ENCODE measurements at regions of chr7 and their contacts with region 1.

Region 1: DNA sequence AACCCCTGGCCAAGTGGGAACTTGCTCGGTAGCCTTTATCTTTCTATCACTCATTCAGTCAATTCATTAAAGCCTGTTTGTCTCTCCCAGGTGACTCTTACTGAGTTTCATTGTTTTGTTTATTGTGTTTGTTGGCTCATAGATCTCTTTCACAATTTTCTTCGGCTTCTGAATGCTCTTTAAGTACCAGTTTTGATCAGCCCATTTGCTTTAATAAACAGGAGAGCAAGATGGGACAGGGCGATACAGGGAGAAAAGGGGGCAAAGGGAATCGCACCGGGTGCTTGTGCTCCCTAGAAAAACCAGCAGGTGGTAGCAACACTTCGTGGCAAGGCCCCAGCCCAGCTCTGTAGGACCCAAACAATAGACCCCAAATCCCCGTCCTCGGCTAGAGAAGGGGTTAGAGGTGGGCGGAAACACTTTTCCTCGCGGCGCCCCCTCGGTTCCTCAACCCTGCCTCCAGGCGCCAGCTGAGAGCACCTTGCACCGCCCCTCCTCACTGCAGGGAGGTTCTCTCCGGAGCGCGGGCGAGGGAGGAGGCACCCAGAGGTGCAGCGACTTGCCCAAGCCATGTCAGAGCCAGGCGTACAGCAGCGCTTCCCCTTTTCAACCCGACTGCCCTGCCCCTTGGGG is 1.0 kb upstream of the EPHB6 start:
- DNase-seq: peak; percentile 85
- ATAC-seq: peak; percentile 88
- H3K4me3 Mint-ChIP-seq: peak overlapping the region; percentile 96
- H3K27ac Mint-ChIP-seq: peak overlapping the region; percentile 78
- H3K4me1 Mint-ChIP-seq: peaks cover 27% of the 10 kb centered on the region
- H3K27me3 Mint-ChIP-seq: peaks cover 2% of the 10 kb centered on the region

Region 2: GRCh38 chr7:142873281-142873787 is 19.5 kb after region 1 on chr7:
- CTCF ChIA-PET with region 1: interaction called, 42 read pairs
- POLR2A ChIA-PET with region 1: no interaction called
- intact Hi-C with region 1: no loop called
- DNase-seq: peak; percentile 68
- ATAC-seq: peak; percentile 77
- H3K4me3 Mint-ChIP-seq: no peak overlapping the region
- H3K27ac Mint-ChIP-seq: no peak overlapping the region
- H3K4me1 Mint-ChIP-seq: no peaks in the 10 kb centered on the region
- H3K27me3 Mint-ChIP-seq: no peaks in the 10 kb centered on the region

Region 3: GRCh38 chr7:142880876-142881505 is 27.1 kb after region 1 on chr7:
- CTCF ChIA-PET with region 1: interaction called, 6 read pairs
- POLR2A ChIA-PET with region 1: no interaction called
- intact Hi-C with region 1: loop called in 1 of 2 experiments (anchors 2 kb)
- DNase-seq: peak; percentile 67
- ATAC-seq: peak; percentile 88
- H3K4me3 Mint-ChIP-seq: no peak overlapping the region
- H3K27ac Mint-ChIP-seq: no peak overlapping the region
- H3K4me1 Mint-ChIP-seq: no peaks in the 10 kb centered on the region
- H3K27me3 Mint-ChIP-seq: peaks cover 4% of the 10 kb centered on the region

Region 4: DNA sequence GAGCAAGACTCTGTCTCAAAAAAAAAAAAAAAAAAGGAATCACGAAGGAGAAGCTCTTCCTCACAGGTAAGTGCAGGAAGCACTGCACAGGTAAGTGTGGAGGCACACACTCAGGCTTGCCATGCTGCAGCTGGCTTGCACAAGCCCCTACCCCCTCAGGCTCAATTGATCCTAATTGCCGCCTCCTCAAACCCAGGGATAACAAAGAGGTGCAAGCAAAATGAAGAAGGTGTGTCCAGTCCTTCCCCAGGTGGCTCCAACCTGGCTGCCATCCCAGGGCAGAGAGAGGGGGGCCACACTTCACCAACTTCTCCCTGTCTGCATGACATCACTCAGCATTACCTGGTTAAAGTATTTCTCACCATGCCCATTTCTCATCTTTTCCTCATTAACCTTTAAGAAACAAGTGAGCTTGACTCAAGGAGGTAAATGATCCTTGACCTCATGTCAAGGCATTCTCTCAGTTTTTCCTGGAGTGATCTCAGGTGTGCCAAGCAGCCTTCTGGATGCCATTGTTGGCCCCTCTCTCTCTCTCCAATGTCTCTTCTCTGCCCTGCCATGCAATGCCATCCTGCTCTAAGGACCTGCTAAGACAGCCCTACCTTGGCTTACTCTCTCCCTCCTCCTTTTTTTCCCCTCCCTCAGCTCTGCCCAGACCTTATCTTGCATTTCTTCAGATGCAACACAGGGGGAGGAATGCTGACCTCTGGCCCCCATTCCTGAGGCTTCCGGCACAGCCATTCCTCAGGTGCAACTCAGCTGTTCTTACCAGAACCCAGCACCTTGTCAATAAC is 44.7 kb after region 1 on chr7:
- CTCF ChIA-PET with region 1: no interaction called
- POLR2A ChIA-PET with region 1: no interaction called
- intact Hi-C with region 1: no loop called
- DNase-seq: no peak
- ATAC-seq: no peak
- H3K4me3 Mint-ChIP-seq: no peak overlapping the region
- H3K27ac Mint-ChIP-seq: no peak overlapping the region
- H3K4me1 Mint-ChIP-seq: no peaks in the 10 kb centered on the region
- H3K27me3 Mint-ChIP-seq: no peaks in the 10 kb centered on the region

Region 5: GRCh38 chr7:142939226-142939910 is 85.5 kb after region 1 on chr7 and contains the start of gene LLCFC1:
- CTCF ChIA-PET with region 1: no interaction called
- POLR2A ChIA-PET with region 1: no interaction called
- intact Hi-C with region 1: loop called in 1 of 2 experiments (anchors 1 kb)
- DNase-seq: peak; percentile 24
- ATAC-seq: peak; percentile 30
- H3K4me3 Mint-ChIP-seq: no peak within 1 kb of the TSS
- H3K27ac Mint-ChIP-seq: no peak within 1 kb of the TSS
- H3K4me1 Mint-ChIP-seq: no peaks in the 10 kb centered on the region
- H3K27me3 Mint-ChIP-seq: no peaks in the 10 kb centered on the region
- total RNA-seq, gene LLCFC1: not detected

Measured in activated CD4-positive, alpha-beta T cell treated with anti-CD3 and anti-CD28 coated beads for 36 hours (primary cell).